Mammary epithelial cell (primary cell): ENCODE measurements at regions of chr10 and their contacts with region 1.

Region 1: DNA sequence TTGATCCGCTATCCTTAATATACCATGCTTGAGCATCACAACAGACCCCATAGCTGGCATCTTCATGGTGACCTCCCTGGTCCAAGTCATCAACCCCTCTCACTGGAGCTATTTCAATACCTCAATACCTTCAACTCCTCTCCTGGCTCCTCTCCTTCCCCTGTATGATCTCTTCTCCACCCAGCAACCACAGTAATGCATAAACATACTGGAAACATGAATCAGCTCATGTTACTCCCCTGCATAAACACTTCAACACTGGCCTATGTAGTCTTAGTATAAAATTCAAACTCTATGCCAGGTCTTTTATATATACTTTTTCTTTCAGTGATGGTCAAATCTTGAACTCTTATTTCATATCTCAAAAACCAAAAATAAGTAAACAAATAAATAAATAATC is 31.8 kb upstream of the TMEM273 start:
- DNase-seq: peak; percentile 17
- H3K4me3 ChIP-seq: no peak overlapping the region
- H3K27ac ChIP-seq: no peak overlapping the region
- H3K4me1 ChIP-seq: no peaks in the 10 kb centered on the region
- H3K27me3 ChIP-seq: no peaks in the 10 kb centered on the region
- CTCF ChIP-seq: no peak

Region 2: DNA sequence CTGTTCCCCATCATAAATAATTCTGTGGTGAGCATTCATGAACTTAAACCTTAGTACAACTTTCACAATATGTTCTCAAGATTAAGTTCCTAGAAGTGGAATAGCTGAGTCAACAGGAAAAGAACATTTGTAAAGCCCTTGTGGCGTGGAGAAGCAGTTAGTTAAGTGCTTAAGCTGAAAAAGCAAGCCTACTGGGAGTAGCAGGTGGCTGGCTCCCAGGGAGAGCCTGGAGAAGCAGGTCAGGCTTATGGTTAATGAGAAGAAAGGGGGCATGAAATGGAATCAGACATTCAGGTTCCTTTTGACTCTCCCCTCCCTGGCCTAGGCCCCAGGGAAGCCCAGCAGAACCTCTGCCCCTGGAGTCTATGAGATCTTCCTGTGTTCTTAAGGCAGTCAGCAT is 140.0 kb before region 1 on chr10:
- CTCF ChIA-PET with region 1: no interaction called
- dilution Hi-C with region 1: loop called (anchors 10 kb)
- in situ Hi-C with region 1: no loop called
- intact Hi-C with region 1: no loop called
- DNase-seq: no peak
- H3K4me3 ChIP-seq: no peak overlapping the region
- H3K27ac ChIP-seq: no peak overlapping the region
- H3K4me1 ChIP-seq: no peaks in the 10 kb centered on the region
- H3K27me3 ChIP-seq: no peaks in the 10 kb centered on the region
- CTCF ChIP-seq: no peak

Region 3: GRCh38 chr10:49135575-49136313 is 84.3 kb before region 1 on chr10:
- CTCF ChIA-PET with region 1: no interaction called
- dilution Hi-C with region 1: loop called (anchors 5 kb)
- in situ Hi-C with region 1: no loop called
- intact Hi-C with region 1: no loop called
- DNase-seq: no peak
- H3K4me3 ChIP-seq: no peak overlapping the region
- H3K27ac ChIP-seq: no peak overlapping the region
- H3K4me1 ChIP-seq: no peaks in the 10 kb centered on the region
- H3K27me3 ChIP-seq: no peaks in the 10 kb centered on the region
- CTCF ChIP-seq: no peak

Region 4: DNA sequence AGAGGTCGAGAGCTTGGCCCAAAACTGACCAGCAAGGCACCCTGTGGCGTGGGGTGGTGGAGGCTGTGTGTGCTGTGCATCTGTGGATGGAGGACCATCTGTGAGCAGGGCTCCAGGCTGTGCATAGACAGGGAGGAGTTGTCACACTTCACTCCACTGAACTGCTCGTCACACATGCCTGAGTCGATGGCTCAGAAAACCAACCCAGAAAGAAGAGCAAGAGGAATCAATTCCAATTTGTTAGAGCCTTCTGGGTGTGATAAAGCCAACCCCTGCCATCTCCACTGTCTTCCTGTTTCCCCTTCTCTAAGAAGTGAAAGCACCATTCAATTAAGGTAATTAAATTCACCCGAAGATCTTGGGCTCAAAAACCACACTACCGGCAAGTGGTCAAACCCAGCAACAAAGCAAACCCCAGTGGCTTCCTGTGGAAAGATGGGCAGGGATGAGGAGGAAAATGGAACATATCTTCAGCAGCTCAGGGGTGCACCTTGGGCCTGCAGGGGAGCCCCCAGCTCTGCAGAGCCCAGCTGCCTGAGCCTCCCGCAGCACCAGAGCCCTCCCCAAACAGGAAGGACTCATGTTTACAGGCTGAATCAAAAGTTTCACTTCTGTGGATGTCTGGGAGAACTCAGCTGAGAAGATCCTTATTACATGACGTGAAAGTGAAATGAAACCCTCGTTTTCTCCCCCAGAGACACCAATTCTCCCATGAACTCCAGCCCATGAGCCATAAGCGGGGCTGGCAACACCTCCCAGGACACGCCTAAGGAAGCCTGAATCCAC is 89.8 kb after region 1 on chr10:
- CTCF ChIA-PET with region 1: no interaction called
- dilution Hi-C with region 1: loop called (anchors 5 kb)
- in situ Hi-C with region 1: no loop called
- intact Hi-C with region 1: no loop called
- DNase-seq: no peak
- H3K4me3 ChIP-seq: no peak overlapping the region
- H3K27ac ChIP-seq: no peak overlapping the region
- H3K4me1 ChIP-seq: no peaks in the 10 kb centered on the region
- H3K27me3 ChIP-seq: peaks cover 3% of the 10 kb centered on the region
- CTCF ChIP-seq: no peak

Region 5: GRCh38 chr10:49335364-49335972 is 115.4 kb after region 1 on chr10:
- CTCF ChIA-PET with region 1: no interaction called
- dilution Hi-C with region 1: no loop called
- in situ Hi-C with region 1: no loop called
- intact Hi-C with region 1: no loop called
- DNase-seq: no peak
- H3K4me3 ChIP-seq: no peak overlapping the region
- H3K27ac ChIP-seq: no peak overlapping the region
- H3K4me1 ChIP-seq: no peaks in the 10 kb centered on the region
- H3K27me3 ChIP-seq: no peaks in the 10 kb centered on the region
- CTCF ChIP-seq: no peak

Region 6: DNA sequence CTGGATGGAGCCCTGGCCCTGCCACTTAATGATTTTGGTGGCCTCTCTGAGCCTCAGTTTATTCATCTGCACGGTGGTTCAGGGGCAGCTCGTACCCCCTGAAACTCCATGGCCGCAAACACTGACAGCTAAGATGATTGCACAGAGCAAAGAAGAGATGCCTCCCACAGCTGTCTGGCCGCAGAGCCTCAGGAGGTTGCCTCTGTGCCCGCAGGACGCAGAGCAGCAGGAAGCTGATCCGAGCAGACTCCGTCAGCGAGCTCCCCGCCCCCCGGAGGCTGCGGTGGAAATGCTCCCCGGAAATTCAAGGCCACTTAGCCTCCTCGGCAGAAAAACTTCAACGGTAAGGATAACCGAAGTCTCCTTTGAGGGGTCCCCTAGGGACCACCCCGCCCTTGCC is 429.3 kb after region 1 on chr10:
- CTCF ChIA-PET with region 1: no interaction called
- dilution Hi-C with region 1: no loop called
- in situ Hi-C with region 1: no loop called
- intact Hi-C with region 1: no loop called
- DNase-seq: no peak
- H3K4me3 ChIP-seq: no peak overlapping the region
- H3K27ac ChIP-seq: no peak overlapping the region
- H3K4me1 ChIP-seq: no peaks in the 10 kb centered on the region
- H3K27me3 ChIP-seq: peaks cover 6% of the 10 kb centered on the region
- CTCF ChIP-seq: no peak